Endothelial cell of umbilical vein (primary cell): ENCODE measurements at regions of chr16 and their contacts with region 1.

Region 1: GRCh38 chr16:12819126-12820117 is 15.7 kb upstream of the CPPED1 start:
- DNase-seq: peak; percentile 60
- H3K4me3 ChIP-seq: no peak overlapping the region
- H3K27ac ChIP-seq: no peak overlapping the region
- H3K4me1 ChIP-seq: no peaks in the 10 kb centered on the region
- H3K27me3 ChIP-seq: peaks cover 0 to 2% of the 10 kb centered on the region in 2 experiments
- CTCF ChIP-seq: peak; percentile 83 to 88
- POLR2A ChIP-seq: no peak

Region 2: GRCh38 chr16:12228602-12229499 is 590.6 kb before region 1 on chr16:
- CTCF ChIA-PET with region 1: no interaction called
- POLR2A ChIA-PET with region 1: no interaction called
- dilution Hi-C with region 1: no loop called
- intact Hi-C with region 1: loop called (anchors 1 kb)
- DNase-seq: peak; percentile 67
- H3K4me3 ChIP-seq: no peak overlapping the region
- H3K27ac ChIP-seq: no peak overlapping the region
- H3K4me1 ChIP-seq: no peaks in the 10 kb centered on the region
- H3K27me3 ChIP-seq: no peaks in the 10 kb centered on the region
- CTCF ChIP-seq: peak; percentile 64 to 93
- POLR2A ChIP-seq: no peak

Region 3: DNA sequence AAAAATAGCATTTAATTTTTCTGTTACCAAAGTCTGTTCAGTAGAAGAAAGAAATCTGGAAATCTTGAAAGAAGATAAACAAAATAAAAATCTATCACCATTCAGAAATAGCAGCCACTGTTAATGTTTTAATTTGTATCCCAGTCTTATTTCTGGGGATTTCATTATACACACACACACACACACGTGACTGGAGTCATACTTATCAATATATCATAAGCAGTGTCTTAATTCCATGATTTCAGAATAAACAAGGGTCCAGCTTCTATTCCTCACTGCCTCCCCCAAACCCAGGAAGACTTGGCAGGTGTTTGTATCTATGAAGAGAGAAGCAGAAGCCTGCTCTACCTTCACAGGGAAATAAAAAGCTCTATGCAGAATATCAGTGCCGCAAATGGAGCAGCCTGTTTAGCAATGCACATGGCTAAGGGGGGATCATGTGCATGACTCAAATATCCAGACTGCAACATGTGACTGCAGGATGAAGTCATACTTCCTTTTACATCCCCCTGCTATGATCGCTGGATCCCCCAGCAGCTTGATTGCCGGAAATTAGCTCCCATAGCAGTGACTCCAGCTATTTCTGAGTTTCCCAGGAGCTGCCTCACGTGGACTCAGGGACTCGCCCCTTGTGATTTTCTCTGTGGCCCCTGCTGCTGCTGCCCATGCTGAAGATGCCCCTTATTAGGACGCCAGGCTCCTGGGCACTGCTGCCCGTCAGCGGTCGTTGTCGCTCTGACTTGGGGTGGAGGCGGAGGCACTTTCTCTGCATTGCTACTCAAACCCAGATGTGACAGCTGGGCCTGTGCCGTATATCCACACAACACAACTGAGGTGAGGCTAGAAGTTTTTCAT is 356.8 kb before region 1 on chr16:
- CTCF ChIA-PET with region 1: interaction called, 3 read pairs
- POLR2A ChIA-PET with region 1: no interaction called
- dilution Hi-C with region 1: no loop called
- intact Hi-C with region 1: loop called (anchors 2 kb)
- DNase-seq: peak; percentile 70
- H3K4me3 ChIP-seq: no peak overlapping the region
- H3K27ac ChIP-seq: peak overlapping the region; percentile 82
- H3K4me1 ChIP-seq: peaks cover 12% of the 10 kb centered on the region
- H3K27me3 ChIP-seq: no peaks in the 10 kb centered on the region
- CTCF ChIP-seq: no peak
- POLR2A ChIP-seq: no peak

Region 4: GRCh38 chr16:12646490-12647274 is 172.7 kb before region 1 on chr16:
- CTCF ChIA-PET with region 1: interaction called, 3 read pairs
- POLR2A ChIA-PET with region 1: no interaction called
- dilution Hi-C with region 1: no loop called
- intact Hi-C with region 1: loop called (anchors 5 kb)
- DNase-seq: peak; percentile 94
- H3K4me3 ChIP-seq: no peak overlapping the region
- H3K27ac ChIP-seq: peak overlapping the region; percentile 67
- H3K4me1 ChIP-seq: peaks cover 29% of the 10 kb centered on the region
- H3K27me3 ChIP-seq: no peaks in the 10 kb centered on the region
- CTCF ChIP-seq: no peak
- POLR2A ChIP-seq: no peak

Region 5: GRCh38 chr16:12803203-12804097 is 16.0 kb before region 1 on chr16 and contains the start of gene CPPED1:
- CTCF ChIA-PET with region 1: interaction called, 5 read pairs
- POLR2A ChIA-PET with region 1: no interaction called
- dilution Hi-C with region 1: no loop called
- intact Hi-C with region 1: loop called (anchors 1 kb)
- DNase-seq: peak; percentile 91
- H3K4me3 ChIP-seq: peak within 1 kb of the TSS; percentile 35 to 89 (median 76)
- H3K27ac ChIP-seq: peak within 1 kb of the TSS; percentile 99
- H3K4me1 ChIP-seq: peaks cover 26% of the 10 kb centered on the region
- H3K27me3 ChIP-seq: no peaks in the 10 kb centered on the region
- CTCF ChIP-seq: no peak
- POLR2A ChIP-seq: peak; percentile 55
- total RNA-seq, gene CPPED1: 55.8 and 59.3 TPM in 2 replicates